Posterior cingulate gyrus (tissue), 11 donors: ENCODE measurements at regions of chr13 and their contacts with region 1.

Region 1: DNA sequence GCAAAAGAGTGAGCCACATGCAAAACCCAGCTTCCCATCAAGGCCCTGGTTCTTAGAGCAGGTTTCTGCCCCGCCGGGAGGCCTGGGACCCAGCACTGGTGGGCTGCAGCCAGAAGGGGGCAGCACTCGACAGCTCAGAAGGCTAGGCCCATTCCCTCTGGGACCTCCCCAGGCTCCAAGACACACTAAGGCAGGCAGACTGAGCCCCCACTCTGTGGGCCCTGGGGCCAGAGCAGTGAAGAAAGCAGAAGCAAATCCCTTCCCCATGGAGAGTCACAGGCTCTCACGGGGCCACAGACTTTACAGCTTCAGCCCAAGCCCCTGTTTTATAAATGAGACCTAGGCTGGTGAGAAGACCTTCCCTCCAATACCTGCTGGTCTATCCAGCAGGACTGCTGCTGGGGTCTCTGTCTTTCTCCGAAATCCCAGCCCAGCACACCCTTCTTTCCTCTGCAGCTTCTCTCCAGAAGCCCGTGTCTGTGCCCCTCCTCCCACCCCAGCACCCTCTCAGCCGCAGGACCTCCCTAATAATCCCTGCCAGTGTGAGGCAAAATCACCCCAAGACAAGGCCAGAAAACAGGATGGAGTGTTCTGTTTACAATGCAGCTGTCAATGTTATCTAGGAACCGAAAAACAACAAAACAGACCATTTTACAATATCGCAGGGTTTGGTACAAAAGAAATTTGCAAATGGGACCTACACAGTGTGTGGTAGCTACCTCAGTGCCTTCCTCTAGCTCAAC is 109.3 kb downstream of the ABCC4 start:
- DNase-seq: peak; percentile 47 to 96 (median 71)

Region 2: GRCh38 chr13:95256086-95256485 is 64.1 kb after region 1 on chr13:
- intact Hi-C with region 1: no loop called
- DNase-seq: no peak

Region 3: DNA sequence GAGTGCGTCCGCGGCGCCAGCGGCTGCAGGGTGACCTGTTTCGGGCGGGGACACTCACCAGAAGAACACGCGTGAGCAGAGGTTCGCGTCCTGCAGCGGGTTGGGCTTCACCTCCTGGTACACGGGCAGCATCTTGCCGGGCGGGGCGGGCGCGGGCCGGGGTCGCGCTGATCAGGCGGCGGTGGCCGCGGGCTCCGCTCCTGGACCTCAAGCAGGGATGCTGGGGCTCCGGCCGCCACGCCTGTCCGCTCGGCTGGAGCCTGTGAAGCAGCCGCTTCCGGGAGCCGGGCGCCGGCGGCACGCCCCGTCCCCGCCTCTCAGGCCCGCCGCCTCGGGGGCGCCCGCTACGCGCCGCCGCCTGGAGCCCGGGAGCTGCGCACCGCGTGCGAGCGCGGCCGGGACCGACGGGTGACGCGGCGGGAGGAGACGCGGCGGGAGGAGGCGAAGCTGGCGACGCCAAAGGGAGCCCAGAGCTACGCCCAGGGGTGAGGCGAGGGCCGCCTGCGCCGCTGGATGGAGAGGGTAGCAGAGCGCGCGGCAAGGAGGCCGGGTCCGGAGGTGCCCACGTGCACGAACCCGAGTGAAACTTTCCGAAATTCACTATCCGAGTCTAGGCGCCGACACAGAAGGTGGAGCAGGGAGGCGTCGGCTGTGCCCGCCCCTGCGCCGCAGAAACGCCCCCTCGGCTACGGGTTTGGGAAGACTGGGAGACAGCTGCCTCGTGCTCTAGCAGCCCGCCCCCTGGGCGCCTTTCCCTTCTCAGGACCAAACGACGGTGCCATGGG is 109.4 kb after region 1 on chr13 and contains the start of gene ABCC4:
- intact Hi-C with region 1: loop called (anchors 2 kb)
- DNase-seq: peak; percentile 14 to 90 (median 37)

Region 4: GRCh38 chr13:95378603-95379002 is 186.6 kb after region 1 on chr13:
- intact Hi-C with region 1: loop called (anchors 1 kb)
- DNase-seq: no peak

Region 5: DNA sequence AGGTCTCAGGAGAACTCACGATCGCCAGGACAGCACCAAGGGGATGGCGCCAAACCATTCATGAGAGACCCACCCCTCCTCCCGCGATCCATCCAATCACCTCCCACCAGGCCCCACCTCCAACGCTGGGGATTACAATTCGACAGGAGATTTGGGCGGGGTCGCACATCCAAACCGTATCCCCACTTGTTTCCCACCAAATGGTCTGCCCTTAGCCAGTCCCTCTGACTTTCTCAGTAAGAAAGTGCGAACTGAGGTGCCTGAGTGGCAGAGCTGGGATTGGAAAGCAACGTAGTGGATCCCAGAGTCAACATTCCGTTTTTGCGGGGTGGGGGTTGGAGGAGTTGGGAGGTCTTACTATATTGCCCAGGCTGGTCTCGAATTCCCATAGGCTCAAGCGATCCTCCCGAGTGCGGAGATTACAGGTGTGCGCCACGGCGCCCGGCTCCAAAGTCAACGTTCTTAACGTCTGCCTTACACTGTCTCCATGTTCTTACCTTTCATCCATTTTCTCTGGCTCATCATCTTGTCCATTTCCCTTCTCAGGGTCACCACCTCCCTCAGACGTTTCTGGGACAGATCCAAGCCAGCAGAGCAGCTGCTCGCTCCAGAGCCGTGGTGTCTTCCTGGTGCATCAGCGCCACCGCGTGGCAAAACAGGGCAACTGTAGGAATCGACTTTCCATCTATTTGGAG is 212.0 kb after region 1 on chr13:
- intact Hi-C with region 1: loop called (anchors 1 kb)
- DNase-seq: peak; percentile 67 to 98 (median 87)

Region 6: DNA sequence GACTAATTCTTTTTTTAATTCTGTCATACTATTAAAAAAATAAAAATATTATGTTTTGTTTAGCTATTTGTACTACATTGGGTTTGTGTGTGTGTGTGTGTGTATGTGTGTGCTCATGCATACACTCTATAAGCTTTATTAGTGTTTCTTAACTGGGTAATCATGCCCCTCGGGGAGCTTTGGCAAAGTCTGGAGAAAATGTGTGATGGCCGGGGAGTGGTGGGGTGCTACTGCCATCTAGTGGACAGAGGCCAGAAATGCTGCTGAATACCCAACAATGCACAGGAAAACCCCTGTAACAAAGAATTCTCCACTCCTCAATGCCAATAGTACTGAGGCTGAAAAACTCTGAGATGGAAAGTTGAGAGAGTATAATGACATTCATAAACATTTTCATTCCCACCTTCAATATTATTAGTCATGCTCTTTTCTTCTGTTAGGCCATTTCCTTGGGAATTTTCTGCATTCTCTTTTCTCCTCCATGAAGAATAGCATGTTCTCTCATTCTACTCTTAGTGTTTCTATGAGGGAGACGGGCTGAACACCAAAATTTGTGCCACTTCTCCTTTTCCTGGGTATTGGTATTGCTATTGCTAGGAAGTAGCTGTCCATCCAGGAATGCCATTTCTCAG is 642.3 kb after region 1 on chr13:
- intact Hi-C with region 1: loop called (anchors 10 kb)
- DNase-seq: peak in 9 of 10 donors; percentile 32 to 92 (median 67)